ENCODE measurements at regions of chr12 and their contacts with region 1.

Region 1: DNA sequence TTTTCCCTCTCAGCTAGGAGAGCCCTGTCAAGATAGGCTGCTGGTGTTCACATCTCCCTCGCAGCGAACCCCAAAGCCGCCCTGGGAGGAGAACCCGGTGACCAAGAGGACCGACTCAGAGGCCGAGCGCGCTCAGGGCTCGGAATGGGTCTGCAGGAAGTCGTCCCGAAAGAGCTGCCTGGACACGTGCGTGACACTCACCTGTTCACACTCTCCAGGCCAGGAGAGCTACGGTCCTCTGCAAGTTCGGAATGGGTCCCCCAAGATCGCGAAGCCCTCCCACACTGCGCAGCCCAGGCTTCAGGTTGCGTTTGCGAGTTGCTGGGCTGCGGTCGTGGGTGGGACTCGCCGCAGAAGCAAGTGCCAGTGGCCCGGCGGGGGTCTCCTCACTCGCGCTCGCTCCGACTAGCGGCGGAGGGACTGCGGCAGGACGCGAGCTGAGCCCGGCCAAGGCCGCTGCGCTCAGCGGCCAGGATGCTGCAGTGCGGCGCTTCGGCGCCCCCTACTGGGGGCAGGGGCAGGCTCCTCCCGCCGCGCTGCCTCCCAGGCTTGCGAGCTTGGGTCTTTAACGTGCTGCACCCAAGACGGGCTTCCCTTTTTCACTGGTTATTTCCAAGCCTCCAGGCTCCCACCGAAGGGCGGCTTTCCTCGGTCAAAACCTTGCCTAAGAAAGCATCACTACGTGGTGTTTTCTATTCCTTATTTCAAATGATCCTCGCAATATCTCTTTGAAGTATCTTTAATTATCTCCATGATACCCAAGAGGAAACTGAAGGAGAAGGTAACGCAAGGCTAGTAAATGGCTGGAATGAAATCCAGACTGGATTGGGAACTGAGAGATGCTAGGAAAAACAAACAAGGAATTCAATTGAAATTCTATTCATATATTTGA is at the start of gene RERG:
- DNase-seq: peak; percentile 80
- H3K4me3 ChIP-seq: peak within 1 kb of the TSS; percentile 72
- H3K27ac ChIP-seq: peak within 1 kb of the TSS; percentile 86
- H3K4me1 ChIP-seq: peaks cover 18% of the 10 kb centered on the region
- H3K27me3 ChIP-seq: peaks cover 50% of the 10 kb centered on the region
- CTCF ChIP-seq: peak; percentile 99
- total RNA-seq, gene RERG: 4.5 TPM

Region 2: GRCh38 chr12:15001733-15002382 is 219.4 kb before region 1 on chr12:
- intact Hi-C with region 1: loop called (anchors 5 kb)
- DNase-seq: peak; percentile 39
- H3K4me3 ChIP-seq: no peak overlapping the region
- H3K27ac ChIP-seq: no peak overlapping the region
- H3K4me1 ChIP-seq: peaks cover 16% of the 10 kb centered on the region
- H3K27me3 ChIP-seq: peaks cover 11% of the 10 kb centered on the region
- CTCF ChIP-seq: no peak

Region 3: GRCh38 chr12:15151161-15152120 is 69.8 kb before region 1 on chr12:
- intact Hi-C with region 1: loop called (anchors 2 kb)
- DNase-seq: no peak
- H3K4me3 ChIP-seq: no peak overlapping the region
- H3K27ac ChIP-seq: peak overlapping the region; percentile 49
- H3K4me1 ChIP-seq: peaks cover 19% of the 10 kb centered on the region
- H3K27me3 ChIP-seq: peaks cover 13% of the 10 kb centered on the region
- CTCF ChIP-seq: peak; percentile 65